HCT116 (cell line): ENCODE measurements at regions of chr5 and their contacts with region 1.

Region 1: GRCh38 chr5:176660860-176661641 is 13.8 kb downstream of the TSPAN17 start:
- DNase-seq: peak; percentile 49
- ATAC-seq: peak; percentile 93
- H3K4me3 ChIP-seq: no peak overlapping the region
- H3K27ac ChIP-seq: no peak overlapping the region
- H3K4me1 ChIP-seq: no peaks in the 10 kb centered on the region; a peak in 1 of 4 replicates
- H3K27me3 ChIP-seq: no peaks in the 10 kb centered on the region
- CTCF ChIP-seq: peak; percentile 93 to 97 (median 93)
- POLR2A ChIP-seq: no peak
- RAD21 ChIP-seq: peak; percentile 98

Region 2: DNA sequence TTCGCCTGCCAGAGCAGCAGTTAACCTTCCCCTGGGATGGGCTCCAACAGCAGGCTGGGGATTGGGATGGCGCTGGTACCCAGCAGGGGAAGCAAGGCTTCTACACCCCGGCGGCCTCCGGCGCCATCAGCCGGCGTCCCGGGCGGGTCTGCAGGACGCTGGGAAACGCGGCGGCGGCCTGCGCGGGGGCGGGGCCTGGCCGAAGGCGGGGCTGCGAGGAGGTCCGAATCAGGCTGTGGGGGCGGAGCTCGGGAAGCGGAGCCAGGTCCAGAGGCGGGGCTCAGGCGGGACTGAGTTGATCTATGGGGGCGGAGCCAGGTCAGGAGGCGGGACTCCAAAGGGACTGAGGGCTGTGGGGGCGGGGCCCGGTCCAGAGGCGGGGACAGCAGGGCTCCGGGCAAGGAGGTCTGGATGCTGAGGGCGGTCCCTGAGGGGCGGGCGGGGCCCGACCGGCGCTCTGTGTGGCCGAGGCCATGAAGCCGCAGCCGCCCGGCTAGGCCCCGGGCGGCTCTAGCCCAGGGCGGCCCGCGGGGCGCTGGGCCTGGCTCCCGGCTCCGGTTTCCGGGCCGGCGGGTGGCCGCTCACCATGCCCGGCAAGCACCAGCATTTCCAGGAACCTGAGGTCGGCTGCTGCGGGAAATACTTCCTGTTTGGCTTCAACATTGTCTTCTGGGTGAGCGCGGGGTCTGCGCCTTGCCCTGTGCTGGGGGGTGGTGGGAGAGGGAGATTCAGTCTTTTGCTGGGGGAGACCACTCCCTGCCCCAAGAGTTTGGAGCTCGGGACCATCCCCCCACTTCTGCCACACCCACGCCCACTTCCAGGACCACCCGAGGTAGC is 13.8 kb before region 1 on chr5 and contains the start of gene TSPAN17:
- CTCF ChIA-PET with region 1: interaction called, 11 read pairs
- POLR2A ChIA-PET with region 1: interaction called, 4 read pairs
- RAD21 ChIA-PET with region 1: interaction called in 1 of 2 experiments, 3 read pairs
- intact Hi-C with region 1: no loop called
- DNase-seq: peak; percentile 97
- ATAC-seq: peak; percentile 91
- H3K4me3 ChIP-seq: peak within 1 kb of the TSS; percentile 86 to 89
- H3K27ac ChIP-seq: peak within 1 kb of the TSS; percentile 68
- H3K4me1 ChIP-seq: peaks cover 17 to 44% of the 10 kb centered on the region in 2 experiments
- H3K27me3 ChIP-seq: no peaks in the 10 kb centered on the region
- CTCF ChIP-seq: no peak
- POLR2A ChIP-seq: peak; percentile 95
- RAD21 ChIP-seq: no peak
- total RNA-seq, gene TSPAN17: 50.1 TPM

Region 3: GRCh38 chr5:176744584-176744965 is 83.5 kb after region 1 on chr5:
- CTCF ChIA-PET with region 1: interaction called, 12 read pairs
- POLR2A ChIA-PET with region 1: no interaction called
- RAD21 ChIA-PET with region 1: no interaction called
- intact Hi-C with region 1: no loop called
- DNase-seq: no peak
- ATAC-seq: peak; percentile 61
- H3K4me3 ChIP-seq: no peak overlapping the region
- H3K27ac ChIP-seq: no peak overlapping the region
- H3K4me1 ChIP-seq: no peaks in the 10 kb centered on the region
- H3K27me3 ChIP-seq: 0 out of 2 replicates have a peak, but pooled peaks cover under 1% of the 10 kb centered on the region
- CTCF ChIP-seq: peak; percentile 35 to 70 (median 55); a peak in 5 of 6 replicates
- POLR2A ChIP-seq: no peak
- RAD21 ChIP-seq: peak; percentile 52

Region 4: DNA sequence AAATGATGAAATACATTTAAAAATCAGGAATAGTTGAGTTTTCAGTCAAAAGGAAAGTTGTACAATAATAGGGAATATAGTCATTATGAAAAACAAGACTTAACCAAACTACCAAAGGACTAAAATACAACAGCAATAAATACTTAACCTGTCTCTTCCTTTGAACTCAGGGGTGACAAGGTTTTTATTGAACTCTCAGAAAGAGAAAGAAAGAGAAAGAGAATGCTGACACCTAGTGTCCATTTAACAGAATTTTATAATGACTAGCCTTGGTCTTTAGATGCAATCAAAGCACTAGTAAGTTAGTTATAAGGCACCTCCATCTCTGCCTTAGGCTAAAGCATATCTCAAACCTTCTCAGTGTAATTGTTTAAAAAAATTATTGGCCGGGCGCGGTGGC is 298.0 kb after region 1 on chr5:
- CTCF ChIA-PET with region 1: interaction called, 28 read pairs
- POLR2A ChIA-PET with region 1: no interaction called
- RAD21 ChIA-PET with region 1: interaction called in 1 of 2 experiments, 4 read pairs
- intact Hi-C with region 1: loop called (anchors 2 kb)
- DNase-seq: peak; percentile 10
- ATAC-seq: peak; percentile 78
- H3K4me3 ChIP-seq: no peak overlapping the region
- H3K27ac ChIP-seq: no peak overlapping the region
- H3K4me1 ChIP-seq: no peaks in the 10 kb centered on the region
- H3K27me3 ChIP-seq: no peaks in the 10 kb centered on the region
- CTCF ChIP-seq: peak; percentile 35 to 58 (median 53); a peak in 5 of 6 replicates
- POLR2A ChIP-seq: no peak
- RAD21 ChIP-seq: peak; percentile 71

Region 5: DNA sequence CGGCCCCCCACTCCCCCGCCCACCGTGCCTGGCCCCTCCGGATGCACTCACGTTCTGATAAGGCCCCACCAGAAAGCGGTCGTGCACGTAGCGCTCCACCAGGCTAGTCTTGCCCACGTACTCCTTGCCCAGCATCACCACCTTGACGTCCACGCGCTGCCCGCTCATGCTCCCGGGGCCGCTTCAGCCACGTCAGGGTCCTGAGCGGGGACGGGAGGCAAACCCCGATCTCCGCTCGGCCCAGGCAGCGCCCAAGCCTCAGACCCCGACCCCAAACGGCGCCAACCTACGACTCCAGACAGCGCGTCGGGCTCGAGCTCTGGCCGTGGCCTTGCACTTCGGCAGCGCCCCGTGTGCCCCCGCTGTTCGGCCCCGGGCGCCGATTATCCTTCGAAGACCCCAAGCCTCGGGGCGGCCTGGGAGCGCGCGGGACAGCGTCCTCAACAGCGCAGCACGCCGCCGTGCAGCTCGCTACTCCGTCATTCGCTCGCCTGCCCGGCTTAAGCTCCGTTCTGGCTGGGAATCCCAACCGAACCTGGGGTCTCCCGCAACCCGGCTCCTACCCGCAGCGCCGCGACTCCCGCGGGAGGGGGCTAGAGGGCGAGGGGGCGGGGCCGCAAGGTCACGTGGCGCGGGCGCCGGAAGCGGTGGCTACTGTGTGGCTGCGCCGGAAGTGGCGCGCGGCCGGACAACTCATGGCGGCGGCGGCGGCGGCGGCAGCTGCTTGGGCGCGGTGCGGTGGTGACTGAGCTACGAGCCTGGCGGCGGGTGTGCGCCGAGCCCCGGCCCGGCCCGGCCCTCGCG is 642.3 kb after region 1 on chr5 and contains the starts of genes PRELID1 and RAB24:
- CTCF ChIA-PET with region 1: no interaction called
- POLR2A ChIA-PET with region 1: no interaction called
- RAD21 ChIA-PET with region 1: no interaction called
- intact Hi-C with region 1: loop called (anchors 10 kb)
- DNase-seq: no peak
- ATAC-seq: peak; percentile 58
- H3K4me3 ChIP-seq: peak within 1 kb of the TSS; percentile 88 to 99
- H3K27ac ChIP-seq: peak within 1 kb of the TSS; percentile 72
- H3K4me1 ChIP-seq: peaks cover 19 to 63% of the 10 kb centered on the region in 2 experiments
- H3K27me3 ChIP-seq: no peaks in the 10 kb centered on the region
- CTCF ChIP-seq: peak in 2 of 3 experiments; percentile 33 to 36; a peak in 3 of 6 replicates
- POLR2A ChIP-seq: peak; percentile 69
- RAD21 ChIP-seq: no peak
- total RNA-seq, gene PRELID1: 223 TPM
- total RNA-seq, gene RAB24: 13.5 TPM